Naive thymus-derived CD8-positive, alpha-beta T cell (primary cell): ENCODE measurements at regions of chr14 and their contacts with region 1.

Region 1: GRCh38 chr14:93184388-93185353 is at the starts of genes LYSET and MOAP1:
- DNase-seq: peak; percentile 90 to 96 (median 91)
- ATAC-seq: peak; percentile 90 to 92
- H3K4me3 Mint-ChIP-seq: peak within 1 kb of the TSS; percentile 90 to 98 (median 95)
- H3K27ac Mint-ChIP-seq: peak within 1 kb of the TSS; percentile 93 to 99 (median 98)
- H3K4me1 Mint-ChIP-seq: peaks cover 17 to 49% (median 40%) of the 10 kb centered on the region in 4 donors
- H3K27me3 Mint-ChIP-seq: no peaks in the 10 kb centered on the region
- polyA plus RNA-seq, gene LYSET: 33.8 to 46.0 (median 42.1) TPM
- polyA plus RNA-seq, gene MOAP1: 56.8 to 75.0 (median 72.2) TPM

Region 2: DNA sequence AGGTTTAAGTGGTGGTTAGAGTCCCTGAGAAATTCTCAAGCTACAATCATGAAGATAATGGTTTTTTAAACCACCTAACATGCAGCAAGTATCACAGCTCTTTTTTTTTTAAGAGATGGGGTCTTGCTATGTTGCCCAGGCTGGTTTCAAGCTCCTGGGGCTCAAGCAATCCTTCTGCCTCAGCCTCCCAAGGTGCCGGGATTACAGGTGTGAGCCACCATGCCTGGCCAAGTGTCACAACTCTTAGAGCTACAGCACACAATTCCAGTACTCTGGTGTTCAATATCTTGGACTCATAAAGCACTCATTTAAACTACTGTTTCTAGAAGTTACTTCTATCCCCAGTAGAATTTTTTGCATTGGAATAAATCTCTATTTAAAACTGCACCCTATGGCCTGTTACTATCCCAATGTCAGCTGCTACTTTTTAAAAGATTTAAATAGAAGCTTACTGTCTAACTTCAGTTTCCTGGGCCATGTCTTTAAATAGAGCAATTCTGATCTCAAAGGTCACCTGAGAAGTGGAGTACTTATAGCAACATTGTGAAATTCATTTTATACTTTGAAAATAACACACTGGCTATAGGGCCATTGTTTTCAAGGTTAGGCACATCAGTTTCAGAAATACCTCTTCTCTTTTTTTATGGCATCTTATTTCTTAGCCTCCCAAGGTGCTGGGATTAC is 10.8 kb after region 1 on chr14:
- POLR2A ChIA-PET with region 1: interaction called, 10 read pairs
- DNase-seq: no peak
- ATAC-seq: no peak
- H3K4me3 Mint-ChIP-seq: no peak overlapping the region
- H3K27ac Mint-ChIP-seq: no peak overlapping the region
- H3K4me1 Mint-ChIP-seq: peaks cover 0 to 5% (median 1%) of the 10 kb centered on the region in 4 donors
- H3K27me3 Mint-ChIP-seq: no peaks in the 10 kb centered on the region

Region 3: GRCh38 chr14:93206793-93207467 is 22.3 kb after region 1 on chr14 and contains the starts of genes GON7 and UBR7:
- POLR2A ChIA-PET with region 1: interaction called, 36 read pairs
- DNase-seq: peak; percentile 77 to 91 (median 83)
- ATAC-seq: peak; percentile 93 to 96
- H3K4me3 Mint-ChIP-seq: peak within 1 kb of the TSS; percentile 74 to 100 (median 96)
- H3K27ac Mint-ChIP-seq: peak within 1 kb of the TSS; percentile 83 to 96 (median 94)
- H3K4me1 Mint-ChIP-seq: peaks cover 19 to 55% (median 43%) of the 10 kb centered on the region in 4 donors
- H3K27me3 Mint-ChIP-seq: no peaks in the 10 kb centered on the region
- polyA plus RNA-seq, gene GON7: 9.5 to 18.8 (median 17.4) TPM
- polyA plus RNA-seq, gene UBR7: 24.9 to 28.2 (median 26.1) TPM